ENCODE measurements at regions of chr16 and their contacts with region 1.

Region 1: DNA sequence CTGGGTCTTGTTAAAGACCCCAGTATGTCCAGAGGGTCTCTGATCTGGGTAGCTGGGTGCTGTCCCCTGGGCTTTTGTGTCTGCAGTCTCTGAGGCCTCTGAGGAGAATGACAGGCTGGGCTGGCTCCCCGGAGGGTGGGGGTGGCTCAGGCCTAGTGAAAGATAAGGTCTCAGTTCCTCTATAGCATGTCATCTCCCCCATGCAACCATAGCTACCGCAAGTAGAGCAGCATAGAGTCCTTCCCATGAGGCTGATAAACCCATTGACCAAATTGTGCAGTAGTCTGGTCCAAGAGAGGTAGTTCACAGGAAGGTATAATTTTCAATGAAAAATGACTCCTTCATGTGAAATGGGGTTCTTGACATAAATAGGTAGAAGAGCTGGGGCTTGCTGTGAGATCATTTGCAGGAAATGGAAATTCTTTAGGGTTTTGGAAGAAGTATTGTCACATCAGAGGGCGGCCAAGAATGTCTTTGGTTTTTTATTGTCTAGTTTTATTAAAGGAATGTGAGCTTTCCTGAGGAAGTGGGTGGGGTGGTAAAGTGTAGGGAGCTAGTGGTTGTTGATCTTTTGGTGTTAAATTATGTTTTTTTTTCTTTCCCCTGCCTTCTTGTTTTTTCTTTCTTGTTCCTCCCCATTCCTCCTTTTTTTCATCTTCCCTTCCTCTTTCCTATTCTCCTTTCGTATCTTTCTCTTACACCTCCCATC is 21.0 kb downstream of the SLC7A6OS start:
- DNase-seq: peak; percentile 57
- H3K4me3 Mint-ChIP-seq: peak overlapping the region; percentile 45
- H3K27ac Mint-ChIP-seq: peak overlapping the region; percentile 94
- H3K4me1 Mint-ChIP-seq: peaks cover 72% of the 10 kb centered on the region
- H3K27me3 Mint-ChIP-seq: no peaks in the 10 kb centered on the region

Region 2: DNA sequence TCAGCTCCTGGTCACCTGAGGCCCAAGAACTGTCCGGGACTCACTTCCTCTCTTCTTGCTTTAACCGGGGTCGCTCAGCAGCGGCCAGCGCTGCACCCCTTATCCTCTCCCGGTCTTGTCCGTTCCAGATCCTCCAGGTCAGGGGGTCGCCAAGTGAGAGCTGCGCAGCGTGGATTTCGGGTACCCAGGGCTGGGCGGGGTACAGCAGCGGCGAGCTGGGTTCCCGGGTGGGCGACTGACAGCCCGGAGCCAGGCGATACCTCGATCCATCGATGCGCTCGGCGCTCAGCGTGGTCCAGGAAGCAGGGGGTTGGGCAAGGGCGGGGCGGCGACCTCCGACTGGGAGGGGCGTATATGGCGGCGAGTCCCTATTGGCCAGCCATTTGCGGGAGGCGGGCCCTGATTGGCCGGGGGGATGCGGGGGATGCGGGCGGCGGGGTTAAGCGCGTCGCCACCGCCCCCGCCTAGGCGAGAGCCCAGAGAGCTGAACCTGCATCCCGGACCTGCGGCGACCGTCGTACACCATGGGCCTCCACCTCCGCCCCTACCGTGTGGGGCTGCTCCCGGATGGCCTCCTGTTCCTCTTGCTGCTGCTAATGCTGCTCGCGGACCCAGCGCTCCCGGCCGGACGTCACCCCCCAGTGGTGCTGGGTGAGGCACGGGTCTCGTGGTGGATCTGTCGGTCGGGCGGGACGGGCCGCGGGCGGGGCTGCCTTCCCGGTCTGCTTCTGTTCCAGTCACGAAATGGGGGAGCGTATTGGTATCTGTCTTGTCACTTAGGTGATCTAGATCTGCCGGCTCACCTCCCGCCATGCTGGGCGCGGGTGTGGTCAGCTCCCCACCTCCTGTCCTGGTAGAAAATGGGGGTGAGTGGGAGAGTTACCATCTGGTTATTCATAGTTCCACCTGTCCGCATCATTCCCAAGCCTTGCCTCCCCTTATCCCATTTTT is 44.6 kb before region 1 on chr16 and contains the start of gene PLA2G15:
- intact Hi-C with region 1: loop called (anchors 1 kb)
- DNase-seq: peak; percentile 92
- H3K4me3 Mint-ChIP-seq: peak within 1 kb of the TSS; percentile 94
- H3K27ac Mint-ChIP-seq: peak within 1 kb of the TSS; percentile 77
- H3K4me1 Mint-ChIP-seq: peaks cover 16% of the 10 kb centered on the region
- H3K27me3 Mint-ChIP-seq: no peaks in the 10 kb centered on the region
- total RNA-seq, gene PLA2G15: 9.0 and 10.3 TPM in 2 replicates

Region 3: GRCh38 chr16:68270353-68270752 is 19.4 kb before region 1 on chr16:
- intact Hi-C with region 1: loop called (anchors 1 kb)
- DNase-seq: no peak
- H3K4me3 Mint-ChIP-seq: peak overlapping the region; percentile 39
- H3K27ac Mint-ChIP-seq: peak overlapping the region; percentile 77
- H3K4me1 Mint-ChIP-seq: peaks cover 74% of the 10 kb centered on the region
- H3K27me3 Mint-ChIP-seq: no peaks in the 10 kb centered on the region

Region 4: GRCh38 chr16:68310761-68311511 is 21.2 kb after region 1 on chr16 and contains the starts of genes PRMT7 and SLC7A6OS:
- intact Hi-C with region 1: loop called (anchors 1 kb)
- DNase-seq: peak; percentile 93
- H3K4me3 Mint-ChIP-seq: peak within 1 kb of the TSS; percentile 91
- H3K27ac Mint-ChIP-seq: peak within 1 kb of the TSS; percentile 87
- H3K4me1 Mint-ChIP-seq: peaks cover 29% of the 10 kb centered on the region
- H3K27me3 Mint-ChIP-seq: no peaks in the 10 kb centered on the region
- total RNA-seq, gene PRMT7: 80.5 and 90.7 TPM in 2 replicates
- total RNA-seq, gene SLC7A6OS: 24.7 and 26.7 TPM in 2 replicates